Psoas muscle (tissue), 8 donors: ENCODE measurements at regions of chr10 and their contacts with region 1.

Region 1: GRCh38 chr10:2392145-2392812 is 655.0 kb upstream of the ADARB2 start:
- DNase-seq: no peak
- ATAC-seq: peak in 1 of 4 donors; percentile 68
- H3K4me3 ChIP-seq: no peak overlapping the region
- H3K27ac ChIP-seq: no peak overlapping the region
- H3K4me1 ChIP-seq: no peaks in the 10 kb centered on the region
- H3K27me3 ChIP-seq: peaks cover 0 to 2% (median 0%) of the 10 kb centered on the region in 3 donors
- CTCF ChIP-seq: no peak

Region 2: GRCh38 chr10:3835770-3836169 is 1443.5 kb after region 1 on chr10:
- intact Hi-C with region 1: loop called in 1 of 2 experiments (anchors 10 kb)
- DNase-seq: no peak
- ATAC-seq: no peak
- H3K4me3 ChIP-seq: no peak overlapping the region
- H3K27ac ChIP-seq: no peak overlapping the region
- H3K4me1 ChIP-seq: peaks cover 5% of the 10 kb centered on the region
- H3K27me3 ChIP-seq: no peaks in the 10 kb centered on the region
- CTCF ChIP-seq: no peak